Calu3 (cell line): ENCODE measurements at regions of chr22 and their contacts with region 1.

Region 1: DNA sequence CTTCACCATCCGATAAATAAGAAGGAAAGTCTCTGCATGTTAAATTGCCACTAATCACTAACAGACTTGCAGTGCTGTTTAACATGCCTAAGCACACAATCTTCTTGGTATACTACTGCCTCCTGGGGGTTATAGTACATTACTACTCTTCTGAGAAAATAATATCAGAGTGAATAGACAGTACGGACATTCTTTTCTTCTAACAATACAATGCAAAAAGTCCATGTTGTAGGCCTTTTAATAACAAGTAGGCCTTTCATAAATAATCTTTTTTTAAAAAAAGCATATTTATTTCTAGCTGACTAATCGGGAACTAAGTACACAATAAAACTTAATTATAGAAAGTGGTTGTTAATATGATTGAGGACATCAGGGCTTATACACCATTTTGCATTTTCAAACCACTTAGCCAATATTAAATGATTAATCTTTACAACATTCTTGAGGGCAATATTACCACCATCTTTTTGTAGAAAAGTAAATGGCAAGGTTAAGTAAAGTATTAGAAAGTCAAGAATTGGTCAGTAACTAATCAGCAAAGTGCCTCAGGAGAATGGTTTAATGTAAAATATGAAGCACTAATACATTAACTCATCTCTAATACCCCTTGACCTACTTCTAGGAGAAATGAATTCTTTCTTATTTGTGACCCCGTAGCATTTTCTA is 84.7 kb downstream of the TTC28 start:
- DNase-seq: no peak
- H3K4me3 Mint-ChIP-seq: no peak overlapping the region
- H3K27ac Mint-ChIP-seq: no peak overlapping the region
- H3K4me1 Mint-ChIP-seq: peaks cover 11% of the 10 kb centered on the region
- H3K27me3 Mint-ChIP-seq: no peaks in the 10 kb centered on the region
- CTCF ChIP-seq: peak; percentile 47

Region 2: GRCh38 chr22:28019881-28020871 is 574.8 kb before region 1 on chr22:
- CTCF ChIA-PET with region 1: no interaction called
- intact Hi-C with region 1: loop called (anchors 1 kb)
- DNase-seq: peak; percentile 77
- H3K4me3 Mint-ChIP-seq: no peak overlapping the region
- H3K27ac Mint-ChIP-seq: no peak overlapping the region
- H3K4me1 Mint-ChIP-seq: no peaks in the 10 kb centered on the region
- H3K27me3 Mint-ChIP-seq: peaks cover 66% of the 10 kb centered on the region
- CTCF ChIP-seq: peak; percentile 97

Region 3: GRCh38 chr22:28051787-28052356 is 543.1 kb before region 1 on chr22:
- CTCF ChIA-PET with region 1: no interaction called
- intact Hi-C with region 1: loop called (anchors 1 kb)
- DNase-seq: peak; percentile 77
- H3K4me3 Mint-ChIP-seq: no peak overlapping the region
- H3K27ac Mint-ChIP-seq: no peak overlapping the region
- H3K4me1 Mint-ChIP-seq: no peaks in the 10 kb centered on the region
- H3K27me3 Mint-ChIP-seq: peaks cover 53% of the 10 kb centered on the region
- CTCF ChIP-seq: peak; percentile 91

Region 4: DNA sequence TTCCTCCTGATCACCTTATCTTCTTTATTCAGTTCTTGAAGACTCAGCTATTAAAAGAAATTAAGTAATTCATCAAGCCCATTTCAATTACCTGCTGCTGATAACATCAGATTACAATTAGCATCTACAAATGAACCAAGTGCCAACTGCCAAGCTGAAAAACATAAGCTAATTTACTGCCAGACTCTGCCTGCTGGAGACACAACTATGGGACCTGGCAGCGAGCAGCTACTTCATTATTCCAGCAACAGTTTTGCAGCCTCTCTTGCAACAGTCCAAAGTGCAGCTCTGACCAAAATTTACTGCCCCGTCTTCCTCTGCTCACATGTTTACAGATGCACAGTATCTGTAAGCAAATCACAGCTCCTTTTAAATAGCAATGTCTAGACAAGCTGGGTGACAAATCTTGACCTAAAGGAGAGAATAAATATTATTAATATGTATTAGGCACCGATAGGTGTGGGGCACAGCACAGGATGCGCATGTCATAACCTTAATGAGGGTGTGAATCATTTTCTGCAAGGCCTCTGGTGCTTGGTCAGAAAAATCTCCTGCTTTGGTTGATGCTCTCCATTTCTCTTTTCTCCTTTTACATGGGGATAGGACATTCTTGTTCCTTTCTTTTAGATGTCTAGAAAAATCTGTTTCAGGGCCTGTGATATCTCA is 443.6 kb before region 1 on chr22:
- CTCF ChIA-PET with region 1: no interaction called
- intact Hi-C with region 1: no loop called
- DNase-seq: no peak
- H3K4me3 Mint-ChIP-seq: no peak overlapping the region
- H3K27ac Mint-ChIP-seq: no peak overlapping the region
- H3K4me1 Mint-ChIP-seq: no peaks in the 10 kb centered on the region
- H3K27me3 Mint-ChIP-seq: peaks cover 34% of the 10 kb centered on the region
- CTCF ChIP-seq: no peak

Region 5: DNA sequence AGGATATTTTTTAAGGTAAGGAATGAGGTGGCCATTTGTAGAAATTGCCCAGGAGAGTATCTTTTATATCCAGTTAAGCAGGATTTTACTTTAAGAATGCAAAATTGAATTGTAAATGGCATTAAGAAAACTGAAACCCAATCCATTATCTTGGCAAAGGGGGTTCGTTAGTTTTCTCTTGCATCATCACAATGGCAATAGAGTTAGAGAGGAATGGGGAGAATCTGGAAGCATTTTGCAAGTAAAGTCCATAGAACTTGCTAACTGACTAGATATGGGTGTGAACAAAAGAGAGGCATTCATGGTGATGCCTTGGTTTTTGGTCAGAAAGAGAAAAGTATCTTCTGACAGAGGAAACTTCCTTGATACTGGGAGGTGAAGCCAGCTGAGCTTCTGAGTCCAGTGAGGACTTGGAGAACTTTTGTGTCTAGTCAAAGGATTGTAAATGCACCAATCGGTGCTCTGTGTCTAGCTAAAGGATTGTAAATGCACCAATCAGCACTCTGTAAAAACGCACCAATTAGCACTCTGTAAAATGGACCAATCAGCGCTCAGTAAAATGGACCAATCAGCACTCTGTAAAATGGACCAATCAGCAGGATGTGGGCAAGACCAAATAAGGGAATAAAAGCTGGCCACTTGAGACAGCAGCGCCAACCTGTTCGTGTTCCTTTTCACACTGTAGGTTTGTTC is 173.9 kb after region 1 on chr22:
- CTCF ChIA-PET with region 1: no interaction called
- intact Hi-C with region 1: no loop called
- DNase-seq: no peak
- H3K4me3 Mint-ChIP-seq: no peak overlapping the region
- H3K27ac Mint-ChIP-seq: no peak overlapping the region
- H3K4me1 Mint-ChIP-seq: peaks cover 6% of the 10 kb centered on the region
- H3K27me3 Mint-ChIP-seq: no peaks in the 10 kb centered on the region
- CTCF ChIP-seq: no peak

Region 6: GRCh38 chr22:28864878-28865596 is 270.1 kb after region 1 on chr22:
- CTCF ChIA-PET with region 1: no interaction called
- intact Hi-C with region 1: no loop called
- DNase-seq: no peak
- H3K4me3 Mint-ChIP-seq: no peak overlapping the region
- H3K27ac Mint-ChIP-seq: no peak overlapping the region
- H3K4me1 Mint-ChIP-seq: peaks cover 15% of the 10 kb centered on the region
- H3K27me3 Mint-ChIP-seq: no peaks in the 10 kb centered on the region
- CTCF ChIP-seq: no peak